Transverse colon (tissue), 4 donors: ENCODE measurements at regions of chr6 and their contacts with region 1.

Region 1: GRCh38 chr6:127249621-127250020 is 17.0 kb upstream of the RNF146 start:
- DNase-seq: no peak
- H3K4me3 ChIP-seq: no peak overlapping the region
- H3K27ac ChIP-seq: no peak overlapping the region
- H3K4me1 ChIP-seq: no peaks in the 10 kb centered on the region
- H3K27me3 ChIP-seq: no peaks in the 10 kb centered on the region
- CTCF ChIP-seq: no peak
- EP300 ChIP-seq: no peak
- POLR2A ChIP-seq: no peak

Region 2: GRCh38 chr6:126020305-126021050 is 1229.1 kb before region 1 on chr6:
- in situ Hi-C with region 1: no loop called
- intact Hi-C with region 1: loop called (anchors 5 kb)
- DNase-seq: no peak
- H3K4me3 ChIP-seq: no peak overlapping the region
- H3K27ac ChIP-seq: no peak overlapping the region
- H3K4me1 ChIP-seq: no peaks in the 10 kb centered on the region
- H3K27me3 ChIP-seq: no peaks in the 10 kb centered on the region
- CTCF ChIP-seq: no peak
- EP300 ChIP-seq: no peak
- POLR2A ChIP-seq: no peak

Region 3: GRCh38 chr6:127160494-127160893 is 89.1 kb before region 1 on chr6:
- in situ Hi-C with region 1: no loop called
- intact Hi-C with region 1: no loop called
- DNase-seq: no peak
- H3K4me3 ChIP-seq: no peak overlapping the region
- H3K27ac ChIP-seq: no peak overlapping the region
- H3K4me1 ChIP-seq: no peaks in the 10 kb centered on the region
- H3K27me3 ChIP-seq: no peaks in the 10 kb centered on the region
- CTCF ChIP-seq: no peak
- EP300 ChIP-seq: no peak
- POLR2A ChIP-seq: no peak

Region 4: GRCh38 chr6:127855542-127856159 is 606.0 kb after region 1 on chr6:
- in situ Hi-C with region 1: no loop called
- intact Hi-C with region 1: no loop called
- DNase-seq: no peak
- H3K4me3 ChIP-seq: no peak overlapping the region
- H3K27ac ChIP-seq: no peak overlapping the region
- H3K4me1 ChIP-seq: no peaks in the 10 kb centered on the region
- H3K27me3 ChIP-seq: no peaks in the 10 kb centered on the region
- CTCF ChIP-seq: peak in 4 of 5 experiments; percentile 22 to 33 (median 24)
- EP300 ChIP-seq: no peak
- POLR2A ChIP-seq: no peak